ENCODE measurements at regions of chr6 and their contacts with region 1.

Region 1: DNA sequence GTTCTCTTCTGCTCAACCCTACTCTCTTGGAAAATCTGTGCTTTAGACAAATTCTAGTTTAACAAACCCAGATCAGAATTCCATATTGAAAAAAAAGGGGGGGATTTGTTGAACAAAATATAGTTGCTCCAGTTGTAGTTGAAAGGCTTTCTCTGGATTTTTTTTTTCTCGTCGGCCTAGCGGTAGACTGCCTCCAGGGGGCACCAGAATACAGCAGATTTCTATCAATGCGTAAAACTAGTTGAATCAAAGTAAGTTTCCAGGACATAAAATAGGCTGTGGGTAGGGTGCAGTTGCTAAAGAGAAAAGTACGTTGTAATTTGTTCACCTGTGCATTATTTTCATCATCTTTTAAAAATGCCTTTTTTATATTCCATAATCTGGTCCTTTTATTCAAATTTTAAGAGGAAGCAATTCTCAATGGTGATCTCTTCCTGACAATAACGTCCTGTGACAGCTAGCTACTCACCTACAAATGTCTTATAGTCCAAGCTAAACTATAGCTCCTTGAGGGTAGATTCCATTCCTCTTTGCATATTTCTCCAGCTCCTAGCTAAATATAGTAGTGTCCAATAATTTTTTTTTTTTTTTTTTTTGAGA is 105.4 kb downstream of the PERP start:
- DNase-seq: no peak
- ATAC-seq: peak; percentile 57
- H3K4me3 Mint-ChIP-seq: no peak overlapping the region
- H3K27ac Mint-ChIP-seq: no peak overlapping the region
- H3K4me1 Mint-ChIP-seq: peaks cover 3% of the 10 kb centered on the region
- H3K27me3 Mint-ChIP-seq: peaks cover 5% of the 10 kb centered on the region
- CTCF ChIP-seq: peak; percentile 98

Region 2: DNA sequence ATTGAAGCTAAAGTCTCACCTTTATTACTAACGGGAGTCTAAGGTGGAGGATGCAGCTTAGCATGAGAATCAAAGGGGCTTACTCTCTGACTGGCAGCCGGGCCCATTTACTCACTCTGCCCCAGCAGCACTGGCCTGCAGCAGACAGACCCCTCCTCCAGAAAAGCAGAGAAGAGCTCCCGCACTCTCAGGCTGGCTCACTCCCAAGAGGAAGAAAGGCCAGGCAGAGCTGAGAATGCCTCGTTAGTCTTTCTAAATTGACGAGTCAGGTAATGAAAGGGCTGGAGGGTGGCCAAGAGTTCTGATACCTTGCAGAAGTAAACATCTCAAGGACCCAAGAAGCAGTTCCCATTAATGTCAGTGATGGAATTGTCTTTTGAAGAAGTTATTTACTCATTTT is 912.5 kb before region 1 on chr6:
- CTCF ChIA-PET with region 1: no interaction called
- POLR2A ChIA-PET with region 1: no interaction called
- intact Hi-C with region 1: loop called (anchors 10 kb)
- DNase-seq: no peak
- ATAC-seq: no peak
- H3K4me3 Mint-ChIP-seq: no peak overlapping the region
- H3K27ac Mint-ChIP-seq: no peak overlapping the region
- H3K4me1 Mint-ChIP-seq: peaks cover 23% of the 10 kb centered on the region
- H3K27me3 Mint-ChIP-seq: no peaks in the 10 kb centered on the region
- CTCF ChIP-seq: no peak

Region 3: GRCh38 chr6:137799950-137800568 is 201.8 kb before region 1 on chr6:
- CTCF ChIA-PET with region 1: interaction called, 4 read pairs
- POLR2A ChIA-PET with region 1: no interaction called
- intact Hi-C with region 1: loop called (anchors 1 kb)
- DNase-seq: no peak
- ATAC-seq: peak; percentile 91
- H3K4me3 Mint-ChIP-seq: no peak overlapping the region
- H3K27ac Mint-ChIP-seq: peak overlapping the region; percentile 65
- H3K4me1 Mint-ChIP-seq: peaks cover 29% of the 10 kb centered on the region
- H3K27me3 Mint-ChIP-seq: no peaks in the 10 kb centered on the region
- CTCF ChIP-seq: no peak

Region 4: GRCh38 chr6:138145402-138145801 is 143.6 kb after region 1 on chr6:
- CTCF ChIA-PET with region 1: no interaction called
- POLR2A ChIA-PET with region 1: no interaction called
- intact Hi-C with region 1: no loop called
- DNase-seq: no peak
- ATAC-seq: peak; percentile 66
- H3K4me3 Mint-ChIP-seq: no peak overlapping the region
- H3K27ac Mint-ChIP-seq: no peak overlapping the region
- H3K4me1 Mint-ChIP-seq: peaks cover 4% of the 10 kb centered on the region
- H3K27me3 Mint-ChIP-seq: peaks cover 18% of the 10 kb centered on the region
- CTCF ChIP-seq: no peak

Region 5: GRCh38 chr6:138287144-138287955 is 285.5 kb after region 1 on chr6:
- CTCF ChIA-PET with region 1: no interaction called
- POLR2A ChIA-PET with region 1: no interaction called
- intact Hi-C with region 1: loop called (anchors 5 kb)
- DNase-seq: no peak
- ATAC-seq: peak; percentile 28
- H3K4me3 Mint-ChIP-seq: no peak overlapping the region
- H3K27ac Mint-ChIP-seq: no peak overlapping the region
- H3K4me1 Mint-ChIP-seq: no peaks in the 10 kb centered on the region
- H3K27me3 Mint-ChIP-seq: peaks cover 7% of the 10 kb centered on the region
- CTCF ChIP-seq: no peak

Region 6: DNA sequence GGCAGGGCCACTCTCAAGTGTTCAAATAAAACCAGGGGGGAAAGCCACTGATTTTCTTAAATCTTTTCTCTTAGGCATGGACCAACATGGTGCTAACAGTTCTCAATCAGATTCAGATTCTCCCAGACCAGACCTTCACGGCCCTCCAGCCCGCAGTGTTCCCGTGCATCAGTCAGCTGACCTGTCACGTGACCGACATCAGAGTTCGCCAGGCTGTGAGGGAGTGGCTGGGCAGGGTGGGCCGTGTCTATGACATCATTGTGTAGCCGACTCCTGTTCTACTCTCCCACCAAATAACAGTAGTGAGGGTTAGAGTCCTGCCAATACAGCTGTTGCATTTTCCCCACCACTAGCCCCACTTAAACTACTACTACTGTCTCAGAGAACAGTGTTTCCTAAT is 334.4 kb after region 1 on chr6:
- CTCF ChIA-PET with region 1: no interaction called
- POLR2A ChIA-PET with region 1: no interaction called
- intact Hi-C with region 1: no loop called
- DNase-seq: no peak
- ATAC-seq: no peak
- H3K4me3 Mint-ChIP-seq: no peak overlapping the region
- H3K27ac Mint-ChIP-seq: no peak overlapping the region
- H3K4me1 Mint-ChIP-seq: no peaks in the 10 kb centered on the region
- H3K27me3 Mint-ChIP-seq: peaks cover 16% of the 10 kb centered on the region
- CTCF ChIP-seq: no peak